Sciatic nerve (tissue), 2 donors: ENCODE measurements at regions of chr11 and their contacts with region 1.

Region 1: DNA sequence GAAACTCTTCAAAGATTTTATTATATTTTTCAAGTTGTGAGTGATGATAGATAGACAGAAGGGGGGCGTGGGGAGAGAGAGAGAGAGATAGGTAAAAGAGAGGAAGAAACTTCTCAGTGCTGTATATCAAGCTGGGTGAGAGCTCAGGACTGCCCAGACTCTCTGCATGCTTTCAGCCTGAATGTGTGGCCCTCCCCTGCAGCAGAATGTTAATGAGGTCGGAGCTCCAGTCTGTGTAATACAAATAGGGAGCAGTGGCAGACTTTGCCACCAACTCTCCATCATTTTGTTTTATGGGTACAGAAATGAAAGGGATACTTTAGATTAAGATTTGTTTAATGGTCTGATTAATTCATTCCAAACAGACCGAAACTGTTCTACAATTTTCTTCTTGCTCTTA is 752.8 kb downstream of the OPCML start:
- DNase-seq: no peak
- ATAC-seq: no peak

Region 2: GRCh38 chr11:132439711-132440255 is 339.7 kb before region 1 on chr11:
- intact Hi-C with region 1: no loop called
- DNase-seq: no peak
- ATAC-seq: no peak

Region 3: GRCh38 chr11:133047036-133047770 is 267.7 kb after region 1 on chr11:
- intact Hi-C with region 1: no loop called
- DNase-seq: no peak
- ATAC-seq: no peak

Region 4: DNA sequence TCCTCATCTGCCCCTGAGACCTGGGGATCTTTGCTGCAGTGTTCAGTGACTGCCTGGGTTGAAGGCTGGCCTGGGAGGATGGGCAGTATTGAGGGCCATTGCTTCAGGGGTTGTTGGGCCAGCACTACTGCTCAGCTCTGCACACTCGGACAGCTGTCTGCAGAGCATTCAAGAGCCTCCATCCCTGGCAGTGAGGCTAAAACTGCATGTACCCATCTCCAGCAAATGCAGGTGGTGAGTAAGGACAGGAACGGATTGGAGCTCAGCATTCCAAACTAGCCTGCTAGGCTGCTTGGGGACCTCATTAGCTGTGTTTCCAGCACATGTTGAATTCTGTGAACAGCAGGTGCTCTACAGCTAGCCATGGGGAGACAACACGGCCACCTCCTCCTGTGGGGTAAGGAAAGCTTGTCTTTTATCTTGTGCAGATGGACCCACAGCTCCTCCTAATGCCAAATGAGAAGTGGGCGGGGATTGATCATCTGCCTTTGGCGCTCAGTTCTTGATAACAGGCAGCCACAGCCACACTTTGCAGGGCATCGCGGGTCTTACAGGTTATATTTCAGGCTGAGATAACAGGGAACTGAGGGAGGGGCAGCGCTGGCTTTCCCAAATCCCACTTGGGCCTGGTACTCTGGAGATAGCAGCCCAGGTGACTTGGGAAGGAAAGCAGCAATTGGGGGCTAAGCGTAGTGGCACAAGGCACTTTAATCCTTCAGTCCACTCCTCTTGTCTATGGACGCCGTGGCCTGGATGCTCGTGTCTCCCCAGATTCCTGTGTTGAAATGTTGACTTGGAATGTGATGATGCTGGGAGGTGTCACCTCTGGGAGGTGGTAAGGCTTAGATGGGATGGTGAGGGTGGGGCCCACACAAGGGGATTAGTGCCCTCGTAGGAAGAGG is 1887.0 kb after region 1 on chr11:
- intact Hi-C with region 1: loop called (anchors 5 kb)
- DNase-seq: no peak
- ATAC-seq: no peak